ENCODE measurements at regions of chr7 and their contacts with region 1.

Region 1: GRCh38 chr7:116236020-116236630 is 25.8 kb downstream of the TES start:
- DNase-seq: peak; percentile 72
- H3K4me3 Mint-ChIP-seq: no peak overlapping the region
- H3K27ac Mint-ChIP-seq: no peak overlapping the region
- H3K4me1 Mint-ChIP-seq: peaks cover 61% of the 10 kb centered on the region
- H3K27me3 Mint-ChIP-seq: no peaks in the 10 kb centered on the region

Region 2: DNA sequence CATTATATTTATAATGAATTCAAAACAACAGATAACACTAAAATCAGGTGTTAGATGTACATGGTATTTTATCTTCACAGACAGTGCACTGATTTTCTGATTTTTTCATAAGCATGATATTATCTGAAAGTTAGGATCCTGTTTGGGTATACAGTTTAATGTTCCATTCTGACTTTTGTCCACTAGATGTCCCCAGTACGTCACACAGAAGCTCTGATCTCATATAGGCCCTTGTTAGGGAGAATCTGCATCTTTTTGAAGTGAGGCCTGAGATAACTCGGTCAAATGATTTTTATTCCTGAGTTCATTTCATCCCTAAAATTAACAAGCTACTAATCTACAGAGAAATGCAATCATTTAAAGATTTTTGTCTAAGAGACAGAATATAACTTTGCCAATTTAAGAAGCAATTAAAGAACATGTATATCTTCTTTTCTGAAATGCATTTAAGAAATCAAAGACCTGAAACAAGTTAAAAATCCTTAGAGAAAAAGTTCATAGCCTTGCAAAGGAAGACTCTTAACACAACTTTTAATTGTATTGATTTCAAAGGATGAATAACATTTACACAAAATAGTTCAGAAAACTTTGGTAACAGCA is 97.8 kb before region 1 on chr7:
- CTCF ChIA-PET with region 1: interaction called, 15 read pairs
- DNase-seq: peak; percentile 39
- H3K4me3 Mint-ChIP-seq: no peak overlapping the region
- H3K27ac Mint-ChIP-seq: no peak overlapping the region
- H3K4me1 Mint-ChIP-seq: peaks cover 22% of the 10 kb centered on the region
- H3K27me3 Mint-ChIP-seq: peaks cover 7% of the 10 kb centered on the region

Region 3: DNA sequence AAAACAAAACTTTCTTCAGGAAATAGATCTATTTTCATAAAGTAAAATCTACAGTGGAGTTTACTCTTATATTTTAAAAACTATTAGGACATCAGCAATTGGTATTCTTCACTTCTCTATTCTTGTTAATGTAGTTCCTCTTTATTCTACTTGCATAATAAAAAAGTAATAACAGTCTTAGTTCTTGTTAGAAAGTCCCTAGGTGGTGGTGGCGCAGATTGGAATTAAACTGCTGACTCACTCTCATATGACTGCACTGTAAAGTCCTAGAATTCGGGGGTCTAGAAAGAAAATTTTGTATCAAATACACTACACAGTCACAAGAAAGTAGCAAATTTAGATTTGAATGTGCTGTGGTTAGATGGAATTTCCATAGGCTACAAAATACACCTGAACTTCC is 70.4 kb before region 1 on chr7:
- CTCF ChIA-PET with region 1: interaction called, 27 read pairs
- DNase-seq: no peak
- H3K4me3 Mint-ChIP-seq: no peak overlapping the region
- H3K27ac Mint-ChIP-seq: no peak overlapping the region
- H3K4me1 Mint-ChIP-seq: peaks cover 21% of the 10 kb centered on the region
- H3K27me3 Mint-ChIP-seq: peaks cover 23% of the 10 kb centered on the region

Region 4: GRCh38 chr7:116173051-116174028 is 62.8 kb before region 1 on chr7:
- CTCF ChIA-PET with region 1: interaction called, 199 read pairs
- DNase-seq: peak; percentile 30
- H3K4me3 Mint-ChIP-seq: no peak overlapping the region
- H3K27ac Mint-ChIP-seq: no peak overlapping the region
- H3K4me1 Mint-ChIP-seq: peaks cover 9% of the 10 kb centered on the region
- H3K27me3 Mint-ChIP-seq: peaks cover 21% of the 10 kb centered on the region

Region 5: GRCh38 chr7:116180302-116180701 is 55.8 kb before region 1 on chr7:
- CTCF ChIA-PET with region 1: interaction called, 199 read pairs
- DNase-seq: peak; percentile 29
- H3K4me3 Mint-ChIP-seq: no peak overlapping the region
- H3K27ac Mint-ChIP-seq: no peak overlapping the region
- H3K4me1 Mint-ChIP-seq: peaks cover 10% of the 10 kb centered on the region
- H3K27me3 Mint-ChIP-seq: peaks cover 2% of the 10 kb centered on the region

Region 6: DNA sequence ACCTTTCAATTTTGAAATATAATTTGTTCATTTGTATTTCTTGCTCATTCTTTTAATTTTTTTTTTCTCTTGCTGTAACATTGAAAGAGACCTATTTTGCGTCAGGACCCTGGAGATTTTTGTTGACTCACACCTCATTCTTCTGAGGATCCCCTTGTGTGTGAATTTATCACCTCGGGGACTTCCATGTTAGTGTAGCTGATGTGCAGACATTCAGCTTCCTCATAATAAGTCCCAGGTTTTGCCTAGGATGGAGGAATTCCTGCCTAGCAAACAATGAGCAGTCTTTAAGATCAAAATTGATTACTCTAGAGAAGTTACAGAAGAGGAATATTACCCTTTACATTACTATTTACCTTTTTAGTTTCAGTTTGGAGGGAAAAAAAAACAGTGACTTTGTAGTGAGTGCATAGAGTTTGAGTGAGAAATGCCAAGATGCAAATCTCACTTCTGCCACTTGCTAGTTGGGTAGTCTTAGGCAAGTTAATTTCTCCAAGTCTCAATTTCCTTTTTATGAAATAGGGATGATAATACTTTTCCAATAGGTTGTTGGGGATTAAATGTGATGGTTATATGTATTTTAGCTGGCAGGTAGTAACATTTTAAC is 11.5 kb before region 1 on chr7:
- CTCF ChIA-PET with region 1: interaction called, 14 read pairs
- DNase-seq: no peak
- H3K4me3 Mint-ChIP-seq: no peak overlapping the region
- H3K27ac Mint-ChIP-seq: no peak overlapping the region
- H3K4me1 Mint-ChIP-seq: peaks cover 76% of the 10 kb centered on the region
- H3K27me3 Mint-ChIP-seq: no peaks in the 10 kb centered on the region

Region 7: GRCh38 chr7:116290740-116291139 is 54.6 kb after region 1 on chr7:
- CTCF ChIA-PET with region 1: no interaction called
- DNase-seq: no peak
- H3K4me3 Mint-ChIP-seq: no peak overlapping the region
- H3K27ac Mint-ChIP-seq: no peak overlapping the region
- H3K4me1 Mint-ChIP-seq: no peaks in the 10 kb centered on the region
- H3K27me3 Mint-ChIP-seq: peaks cover 22% of the 10 kb centered on the region

Region 8: DNA sequence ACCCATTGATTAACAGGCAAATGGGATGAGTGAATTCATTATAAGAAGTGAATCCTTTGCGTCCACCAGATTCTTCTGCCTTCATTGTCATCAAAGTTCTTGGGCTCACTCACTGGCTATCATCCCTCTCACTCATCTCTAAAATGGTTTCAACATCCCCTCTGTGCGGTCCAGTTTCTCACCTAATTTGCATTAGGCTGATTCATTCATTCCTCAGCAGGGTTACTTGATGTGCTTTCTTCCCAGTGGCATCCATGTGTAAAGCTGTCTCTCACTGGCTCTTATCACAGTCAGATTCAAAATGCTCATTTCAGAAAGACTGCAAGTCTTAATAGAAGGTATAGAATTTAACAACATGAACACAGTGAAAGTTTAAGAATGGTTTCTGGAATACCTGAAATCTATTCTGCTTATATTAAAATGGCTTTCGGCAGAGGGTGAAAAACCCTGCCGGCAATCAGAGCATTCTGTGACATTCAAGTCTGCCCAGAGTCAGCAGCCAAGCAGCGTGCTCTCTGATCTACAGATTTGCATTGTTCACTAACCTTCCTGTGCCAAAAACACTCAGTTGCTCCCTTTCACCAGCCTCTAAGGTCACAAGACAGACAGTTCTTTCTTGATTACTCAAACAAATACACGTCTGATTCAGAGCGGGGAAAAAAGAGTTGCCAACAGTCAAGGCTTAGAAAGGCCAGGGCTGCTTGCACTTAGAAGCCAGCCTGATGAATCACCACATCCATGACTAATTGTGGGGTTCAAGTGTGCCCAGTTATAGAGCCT is 80.9 kb after region 1 on chr7:
- CTCF ChIA-PET with region 1: no interaction called
- DNase-seq: no peak
- H3K4me3 Mint-ChIP-seq: no peak overlapping the region
- H3K27ac Mint-ChIP-seq: no peak overlapping the region
- H3K4me1 Mint-ChIP-seq: no peaks in the 10 kb centered on the region
- H3K27me3 Mint-ChIP-seq: peaks cover 4% of the 10 kb centered on the region

Region 9: DNA sequence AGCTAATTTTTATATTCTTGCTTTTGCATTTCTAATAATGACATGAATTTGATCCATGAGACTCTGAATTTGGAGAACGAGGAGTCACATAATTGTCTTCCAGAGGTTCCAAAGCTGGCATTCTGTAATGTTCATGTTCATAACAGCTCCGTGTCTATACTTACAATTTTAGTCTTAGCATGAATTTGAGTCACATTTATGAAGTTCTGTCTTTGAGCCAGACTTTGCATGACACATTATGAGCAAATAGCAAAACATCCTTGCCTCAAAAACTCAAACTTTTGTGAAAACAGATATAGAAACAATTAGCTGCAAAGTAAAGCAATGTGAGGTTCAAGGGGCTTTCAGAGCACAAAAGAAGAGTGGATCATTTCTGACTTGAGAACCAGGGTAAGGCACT is 218.9 kb after region 1 on chr7:
- CTCF ChIA-PET with region 1: no interaction called
- DNase-seq: no peak
- H3K4me3 Mint-ChIP-seq: no peak overlapping the region
- H3K27ac Mint-ChIP-seq: no peak overlapping the region
- H3K4me1 Mint-ChIP-seq: no peaks in the 10 kb centered on the region
- H3K27me3 Mint-ChIP-seq: peaks cover 5% of the 10 kb centered on the region